ENCODE measurements at regions of chr10 and their contacts with region 1.

Region 1: GRCh38 chr10:129222436-129222835 is 244.6 kb upstream of the MGMT start:
- DNase-seq: no peak
- H3K4me3 ChIP-seq: no peak overlapping the region
- H3K27ac ChIP-seq: no peak overlapping the region
- H3K4me1 ChIP-seq: no peaks in the 10 kb centered on the region
- H3K27me3 ChIP-seq: no peaks in the 10 kb centered on the region
- CTCF ChIP-seq: no peak
- POLR2A ChIP-seq: no peak

Region 2: DNA sequence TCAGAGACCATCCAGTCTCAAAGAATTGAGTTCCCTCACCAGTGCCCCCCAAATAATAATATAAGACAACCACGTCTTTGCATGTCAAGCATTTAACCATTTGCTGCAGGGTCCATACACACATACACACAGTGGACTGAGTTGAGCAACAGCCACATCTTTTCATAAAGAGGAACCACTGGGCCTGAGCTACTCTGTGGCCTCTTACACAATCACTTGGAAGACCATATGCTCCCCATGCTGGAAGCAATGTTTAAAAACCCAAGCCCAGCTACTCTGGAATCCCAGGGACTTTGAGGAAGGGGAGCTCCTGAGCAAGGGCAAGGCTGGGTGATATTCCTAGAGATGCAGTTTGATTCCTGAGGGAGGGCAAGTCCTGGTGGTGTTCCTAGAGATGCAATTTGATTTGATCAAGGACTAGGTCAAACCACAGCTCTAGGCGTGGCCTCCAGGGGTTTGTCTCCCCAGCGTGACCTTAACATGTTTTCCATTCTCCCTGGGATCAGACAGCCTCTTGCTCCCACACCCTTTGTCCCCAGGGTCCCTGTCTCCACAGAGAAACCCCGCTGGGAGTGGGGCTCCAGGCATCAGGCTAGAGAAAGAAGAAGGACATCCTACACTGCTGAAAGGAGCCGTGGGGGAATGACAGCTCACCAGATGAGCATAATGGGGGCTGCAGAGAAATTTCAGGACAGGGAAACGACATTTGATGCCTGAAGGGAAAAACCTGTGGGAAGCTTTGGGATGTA is 131.6 kb before region 1 on chr10:
- intact Hi-C with region 1: no loop called
- DNase-seq: no peak
- H3K4me3 ChIP-seq: no peak overlapping the region
- H3K27ac ChIP-seq: no peak overlapping the region
- H3K4me1 ChIP-seq: no peaks in the 10 kb centered on the region
- H3K27me3 ChIP-seq: no peaks in the 10 kb centered on the region
- CTCF ChIP-seq: no peak
- POLR2A ChIP-seq: no peak

Region 3: DNA sequence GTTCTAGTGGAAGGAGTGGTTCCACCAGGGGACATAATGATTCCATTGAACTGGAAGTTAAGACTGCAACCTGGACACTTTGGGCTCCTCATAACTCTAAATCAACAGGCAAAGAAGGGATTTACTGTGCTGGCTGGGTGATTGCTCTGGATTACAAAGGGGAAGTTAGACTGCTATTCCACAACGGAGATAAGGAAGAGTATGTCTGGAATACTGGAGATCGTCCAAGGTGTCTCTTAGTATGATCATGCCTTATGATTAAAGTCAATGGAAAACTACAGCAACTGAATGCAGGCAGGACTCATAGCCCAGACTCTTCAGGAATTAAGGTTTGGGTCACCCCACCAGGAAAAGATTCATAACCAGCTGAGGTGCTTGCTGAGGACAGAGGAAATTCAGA is 66.0 kb before region 1 on chr10:
- intact Hi-C with region 1: loop called (anchors 2 kb)
- DNase-seq: no peak
- H3K4me3 ChIP-seq: no peak overlapping the region
- H3K27ac ChIP-seq: no peak overlapping the region
- H3K4me1 ChIP-seq: no peaks in the 10 kb centered on the region
- H3K27me3 ChIP-seq: no peaks in the 10 kb centered on the region
- CTCF ChIP-seq: no peak
- POLR2A ChIP-seq: no peak

Region 4: GRCh38 chr10:129501652-129502436 is 279.4 kb after region 1 on chr10:
- intact Hi-C with region 1: no loop called
- DNase-seq: no peak
- H3K4me3 ChIP-seq: no peak overlapping the region
- H3K27ac ChIP-seq: no peak overlapping the region
- H3K4me1 ChIP-seq: no peaks in the 10 kb centered on the region
- H3K27me3 ChIP-seq: no peaks in the 10 kb centered on the region
- CTCF ChIP-seq: no peak
- POLR2A ChIP-seq: no peak